ENCODE measurements at regions of chr1 and their contacts with region 1.

Region 1: DNA sequence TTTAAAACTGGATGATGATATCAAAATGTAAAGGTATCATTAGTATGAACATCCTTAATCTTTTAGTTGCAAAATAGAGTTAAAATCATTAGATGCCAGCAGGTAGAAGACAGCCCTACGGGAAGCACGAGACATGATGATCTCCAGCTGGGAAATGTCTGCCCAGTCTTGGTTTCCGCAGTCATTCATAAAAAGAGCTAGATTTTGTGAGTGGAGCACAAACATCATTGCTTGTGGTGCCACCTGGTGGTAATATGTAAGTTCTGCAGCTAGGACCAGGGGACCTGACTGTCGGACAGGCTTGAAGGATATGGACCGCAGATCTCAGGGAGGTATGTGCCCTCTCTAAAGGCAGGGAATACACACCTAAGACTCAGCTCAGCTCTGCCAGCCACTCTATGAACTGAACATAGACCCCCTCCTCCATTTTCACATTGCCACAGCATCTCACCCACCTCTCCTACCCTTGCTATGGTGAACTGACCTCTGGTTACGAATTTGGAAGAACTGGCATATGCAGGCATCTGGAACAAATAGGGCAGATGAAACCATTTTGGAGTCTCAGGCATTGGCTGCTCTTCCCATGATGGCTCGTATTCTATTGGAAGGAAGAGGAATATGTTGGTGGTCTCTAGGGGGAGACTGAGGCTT is 9.2 kb downstream of the FCMR start:
- DNase-seq: peak in 7 of 9 experiments; percentile 37 to 85 (median 67)
- ATAC-seq: peak; percentile 48
- H3K4me3 ChIP-seq: no peak overlapping the region
- H3K4me3 Mint-ChIP-seq: peak overlapping the region; percentile 69
- H3K27ac ChIP-seq: peak overlapping the region in 1 of 2 experiments; percentile 95
- H3K27ac Mint-ChIP-seq: peak overlapping the region; percentile 97
- H3K4me1 ChIP-seq: peaks cover 94% of the 10 kb centered on the region
- H3K4me1 Mint-ChIP-seq: peaks cover 91% of the 10 kb centered on the region
- H3K27me3 ChIP-seq: no peaks in the 10 kb centered on the region
- H3K27me3 Mint-ChIP-seq: no peaks in the 10 kb centered on the region
- CTCF ChIP-seq: peak; percentile 88

Region 2: GRCh38 chr1:206556750-206557635 is 355.6 kb before region 1 on chr1:
- CTCF ChIA-PET with region 1: no interaction called
- POLR2A ChIA-PET with region 1: interaction called, 3 read pairs
- intact Hi-C with region 1: loop called in 1 of 2 experiments (anchors 5 kb)
- DNase-seq: peak; percentile 72 to 95 (median 92)
- ATAC-seq: peak; percentile 64
- H3K4me3 ChIP-seq: peak overlapping the region; percentile 82 to 94
- H3K4me3 Mint-ChIP-seq: peak overlapping the region; percentile 95
- H3K27ac ChIP-seq: peak overlapping the region; percentile 81
- H3K27ac Mint-ChIP-seq: peak overlapping the region; percentile 95
- H3K4me1 ChIP-seq: peaks cover 69% of the 10 kb centered on the region
- H3K4me1 Mint-ChIP-seq: peaks cover 79% of the 10 kb centered on the region
- H3K27me3 ChIP-seq: no peaks in the 10 kb centered on the region
- H3K27me3 Mint-ChIP-seq: no peaks in the 10 kb centered on the region
- CTCF ChIP-seq: no peak

Region 3: DNA sequence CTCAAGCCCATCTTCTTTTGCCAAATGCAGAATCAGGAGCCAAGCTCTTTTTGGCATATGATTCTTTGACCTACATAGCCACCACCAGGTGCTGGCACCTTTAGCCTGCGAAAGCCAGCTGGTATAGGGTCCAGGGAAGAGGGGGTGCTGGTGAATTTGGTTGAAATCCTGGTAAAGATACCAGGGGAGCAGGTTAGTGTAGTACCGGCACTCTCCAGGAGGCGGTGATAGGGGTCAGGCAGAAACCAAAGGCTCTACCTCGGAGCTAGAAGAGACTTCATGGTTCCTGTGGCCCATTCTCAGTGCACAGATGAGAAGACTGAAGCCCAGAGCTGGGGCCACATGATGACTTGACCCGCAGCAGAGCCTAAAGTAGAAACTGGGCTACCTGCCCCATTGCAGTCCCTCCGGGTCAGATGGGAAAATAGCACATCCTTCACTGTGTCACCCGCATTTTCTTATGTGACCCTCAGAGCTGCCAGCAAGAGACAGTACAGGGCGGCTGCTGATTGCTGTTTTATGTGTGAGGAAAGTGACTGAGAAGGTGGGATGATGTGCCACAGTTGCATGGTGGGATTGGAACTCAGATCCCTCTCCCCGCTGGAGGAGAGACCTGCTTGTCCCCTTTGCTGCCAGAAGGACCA is 177.9 kb before region 1 on chr1:
- CTCF ChIA-PET with region 1: interaction called, 43 read pairs
- POLR2A ChIA-PET with region 1: interaction called, 9 read pairs
- intact Hi-C with region 1: loop called (anchors 1 kb)
- DNase-seq: peak; percentile 66 to 87 (median 82)
- ATAC-seq: peak; percentile 57
- H3K4me3 ChIP-seq: no peak overlapping the region
- H3K4me3 Mint-ChIP-seq: no peak overlapping the region
- H3K27ac ChIP-seq: peak overlapping the region in 1 of 2 experiments; percentile 54
- H3K27ac Mint-ChIP-seq: peak overlapping the region; percentile 91
- H3K4me1 ChIP-seq: peaks cover 55% of the 10 kb centered on the region
- H3K4me1 Mint-ChIP-seq: peaks cover 55% of the 10 kb centered on the region
- H3K27me3 ChIP-seq: no peaks in the 10 kb centered on the region
- H3K27me3 Mint-ChIP-seq: no peaks in the 10 kb centered on the region
- CTCF ChIP-seq: peak; percentile 90

Region 4: DNA sequence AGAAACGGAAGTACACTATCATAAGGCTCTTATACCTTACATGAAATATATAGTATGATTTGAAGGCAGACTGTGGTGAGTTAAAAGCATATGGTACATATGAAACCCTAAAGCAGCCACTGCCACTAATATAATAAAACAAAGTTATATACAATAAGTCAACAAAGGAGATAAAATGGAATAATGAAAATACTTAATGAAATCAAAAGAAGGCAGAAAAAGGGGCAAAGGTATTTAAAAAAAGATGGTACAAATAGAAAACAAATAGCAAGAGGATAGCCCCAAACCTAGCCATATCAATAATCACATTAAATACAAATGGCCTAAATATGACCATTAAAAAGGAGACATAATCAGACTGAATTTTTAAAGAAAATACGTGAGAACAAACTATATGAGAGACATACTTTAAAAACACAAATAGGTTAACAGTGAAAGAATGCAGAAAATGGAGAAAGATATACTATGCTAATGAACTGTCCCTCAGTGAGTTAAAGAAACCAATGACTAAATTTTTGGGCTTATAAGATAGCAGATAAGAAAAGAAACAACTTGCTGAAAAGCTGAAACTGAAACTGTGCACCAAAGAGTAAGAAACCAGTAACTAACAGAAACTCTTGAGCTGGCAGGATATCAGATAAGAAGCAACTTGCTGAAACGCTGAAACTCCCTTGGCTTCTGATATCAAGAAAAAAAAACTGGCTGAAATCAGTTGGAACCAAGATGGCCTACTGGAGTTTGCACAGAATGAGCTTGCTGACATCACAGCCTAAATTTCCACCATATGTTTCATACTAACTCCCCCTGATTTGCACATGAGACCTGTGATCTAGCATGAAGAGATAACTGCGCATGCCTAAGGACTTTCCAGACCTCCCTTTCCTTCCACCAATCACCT is 95.9 kb before region 1 on chr1:
- CTCF ChIA-PET with region 1: interaction called, 106 read pairs
- POLR2A ChIA-PET with region 1: interaction called, 6 read pairs
- intact Hi-C with region 1: no loop called
- DNase-seq: peak in 2 of 9 experiments; percentile 66 to 78
- ATAC-seq: peak; percentile 83
- H3K4me3 ChIP-seq: no peak overlapping the region
- H3K4me3 Mint-ChIP-seq: peak overlapping the region; percentile 49
- H3K27ac ChIP-seq: peak overlapping the region; percentile 1 to 47
- H3K27ac Mint-ChIP-seq: peak overlapping the region; percentile 86
- H3K4me1 ChIP-seq: peaks cover 12% of the 10 kb centered on the region
- H3K4me1 Mint-ChIP-seq: peaks cover 19% of the 10 kb centered on the region
- H3K27me3 ChIP-seq: no peaks in the 10 kb centered on the region
- H3K27me3 Mint-ChIP-seq: no peaks in the 10 kb centered on the region
- CTCF ChIP-seq: no peak

Region 5: DNA sequence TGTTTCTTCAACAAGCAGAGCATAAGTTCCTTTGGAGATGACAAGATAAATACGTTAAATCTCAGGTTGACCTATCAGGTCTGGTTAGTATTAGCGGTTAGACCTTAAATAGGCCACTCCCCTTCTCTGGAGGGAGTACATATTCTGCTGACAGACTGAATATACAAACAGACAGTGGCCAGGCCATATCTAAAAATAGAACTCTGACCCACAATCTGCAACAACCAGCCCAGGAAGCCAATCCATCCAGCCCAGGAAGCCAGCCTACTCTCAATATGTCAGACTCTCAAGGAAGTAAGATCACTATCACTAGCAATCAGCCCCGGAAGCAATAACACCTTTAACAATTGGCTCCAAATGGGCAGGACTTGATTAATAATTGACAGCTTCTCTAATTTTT is 40.4 kb before region 1 on chr1:
- CTCF ChIA-PET with region 1: interaction called, 13 read pairs
- POLR2A ChIA-PET with region 1: interaction called, 4 read pairs
- intact Hi-C with region 1: no loop called
- DNase-seq: no peak
- ATAC-seq: no peak
- H3K4me3 ChIP-seq: no peak overlapping the region
- H3K4me3 Mint-ChIP-seq: no peak overlapping the region
- H3K27ac ChIP-seq: no peak overlapping the region
- H3K27ac Mint-ChIP-seq: no peak overlapping the region
- H3K4me1 ChIP-seq: no peaks in the 10 kb centered on the region
- H3K4me1 Mint-ChIP-seq: no peaks in the 10 kb centered on the region
- H3K27me3 ChIP-seq: no peaks in the 10 kb centered on the region
- H3K27me3 Mint-ChIP-seq: no peaks in the 10 kb centered on the region
- CTCF ChIP-seq: no peak

Region 6: DNA sequence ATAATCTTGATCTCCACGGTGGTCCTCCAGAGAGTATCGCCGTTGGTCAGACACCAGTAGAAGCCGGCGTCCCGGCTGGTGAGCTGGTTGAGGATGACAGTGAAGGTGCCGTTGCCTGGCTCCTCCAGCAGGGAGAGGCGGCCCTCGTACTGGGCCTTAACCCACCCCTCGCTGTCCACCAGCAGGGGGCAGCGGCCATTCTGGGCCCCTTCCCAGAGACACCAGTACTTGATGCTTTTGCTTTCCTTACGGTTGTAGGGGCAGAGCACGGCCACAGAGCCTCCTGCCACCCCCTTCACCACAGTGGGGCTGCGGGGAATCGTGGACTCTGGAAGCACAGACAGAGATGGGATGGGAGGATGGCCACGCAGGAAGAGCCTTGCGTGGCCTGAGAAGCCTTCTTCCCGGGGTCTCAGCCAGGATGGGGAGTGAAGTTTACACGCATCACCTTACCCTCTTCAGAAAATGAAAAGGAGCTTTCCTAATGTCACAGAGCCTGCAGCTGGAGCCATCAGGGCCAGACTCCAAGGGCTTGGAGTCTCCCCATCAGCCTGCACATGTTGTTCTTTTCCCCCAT is 23.0 kb after region 1 on chr1:
- CTCF ChIA-PET with region 1: interaction called, 395 read pairs
- POLR2A ChIA-PET with region 1: interaction called, 123 read pairs
- intact Hi-C with region 1: loop called (anchors 1 kb)
- DNase-seq: peak in 6 of 9 experiments; percentile 41 to 65 (median 52)
- ATAC-seq: peak; percentile 45
- H3K4me3 ChIP-seq: no peak overlapping the region
- H3K4me3 Mint-ChIP-seq: no peak overlapping the region
- H3K27ac ChIP-seq: no peak overlapping the region
- H3K27ac Mint-ChIP-seq: no peak overlapping the region
- H3K4me1 ChIP-seq: peaks cover 20% of the 10 kb centered on the region
- H3K4me1 Mint-ChIP-seq: peaks cover 26% of the 10 kb centered on the region
- H3K27me3 ChIP-seq: no peaks in the 10 kb centered on the region
- H3K27me3 Mint-ChIP-seq: no peaks in the 10 kb centered on the region
- CTCF ChIP-seq: peak; percentile 48